Activated CD4-positive, alpha-beta T cell treated with anti-CD3 and anti-CD28 coated beads for 36 hours (primary cell): ENCODE measurements at regions of chr13 and their contacts with region 1.

Region 1: DNA sequence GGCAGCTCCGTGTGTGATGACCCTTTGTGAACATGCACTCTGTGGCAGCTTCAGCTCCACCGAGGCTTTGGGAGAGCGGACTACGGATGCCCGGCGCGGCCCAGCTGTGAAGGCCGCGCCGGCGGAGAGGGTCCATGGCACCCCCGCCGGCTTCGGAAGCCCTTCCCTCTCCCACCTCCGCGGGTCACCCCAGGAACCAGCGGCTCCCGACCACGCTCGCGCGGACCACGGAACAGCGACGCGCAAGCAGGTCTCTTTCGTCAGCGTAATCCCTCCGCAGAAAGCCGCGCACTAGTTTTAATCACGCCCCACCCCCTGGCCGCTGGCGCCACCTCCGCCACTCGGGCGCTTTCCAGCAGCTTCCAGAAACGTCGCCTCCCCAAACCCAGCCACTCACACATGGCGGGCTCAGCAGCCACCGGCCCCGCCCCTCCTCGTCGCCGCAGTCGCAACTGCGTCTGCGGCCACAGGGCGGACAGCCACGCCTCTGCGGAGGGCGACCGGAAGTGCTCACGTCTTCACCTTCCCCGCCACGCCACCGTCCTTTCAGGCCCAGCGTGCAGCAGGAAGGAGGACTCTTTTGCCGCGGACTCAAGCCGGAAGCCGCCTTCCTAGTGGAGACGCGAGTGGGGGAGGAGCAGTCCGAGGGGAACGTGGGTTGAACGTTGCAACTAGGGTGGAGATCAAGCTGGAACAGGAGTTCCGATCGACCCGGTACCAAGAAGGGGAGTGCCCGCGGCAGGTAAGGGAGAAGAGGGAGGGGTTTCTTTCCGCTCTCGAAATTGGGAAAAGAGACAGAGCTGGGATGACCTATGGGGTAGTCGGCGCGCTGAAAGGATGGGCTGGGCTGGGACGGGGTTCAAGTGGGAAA is at the start of gene USPL1:
- DNase-seq: peak; percentile 99
- ATAC-seq: peak; percentile 92
- H3K4me3 Mint-ChIP-seq: no peak within 1 kb of the TSS
- H3K27ac Mint-ChIP-seq: no peak within 1 kb of the TSS
- H3K4me1 Mint-ChIP-seq: peaks cover 31% of the 10 kb centered on the region
- H3K27me3 Mint-ChIP-seq: no peaks in the 10 kb centered on the region
- total RNA-seq, gene USPL1: 14.8 to 16.9 TPM

Region 2: DNA sequence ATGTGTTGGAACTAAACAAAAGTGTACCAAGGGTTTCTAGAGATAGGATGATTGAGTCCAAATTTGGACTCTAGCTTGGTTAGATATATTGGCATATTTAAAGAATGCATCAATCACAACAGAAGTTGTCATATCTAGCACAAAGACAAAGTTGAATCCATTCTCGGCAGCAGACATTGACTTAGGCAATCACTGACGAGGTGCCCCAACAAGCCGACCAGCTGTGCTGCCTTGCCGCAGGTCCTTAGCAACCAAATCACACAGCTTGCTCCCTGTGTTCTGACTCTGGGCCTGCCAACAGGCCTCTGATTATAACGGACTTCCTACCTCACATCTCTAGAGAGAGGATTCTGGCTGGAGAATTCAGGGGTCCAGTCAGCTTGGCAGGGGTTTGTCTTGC is 1588.7 kb before region 1 on chr13:
- CTCF ChIA-PET with region 1: no interaction called
- POLR2A ChIA-PET with region 1: no interaction called
- intact Hi-C with region 1: no loop called
- DNase-seq: no peak
- ATAC-seq: no peak
- H3K4me3 Mint-ChIP-seq: no peak overlapping the region
- H3K27ac Mint-ChIP-seq: no peak overlapping the region
- H3K4me1 Mint-ChIP-seq: no peaks in the 10 kb centered on the region
- H3K27me3 Mint-ChIP-seq: no peaks in the 10 kb centered on the region

Region 3: GRCh38 chr13:29595380-29596063 is 1022.0 kb before region 1 on chr13 and contains the start of gene SLC7A1:
- CTCF ChIA-PET with region 1: no interaction called
- POLR2A ChIA-PET with region 1: no interaction called
- intact Hi-C with region 1: loop called in 1 of 2 experiments (anchors 1 kb)
- DNase-seq: peak; percentile 92
- ATAC-seq: peak; percentile 88
- H3K4me3 Mint-ChIP-seq: peak within 1 kb of the TSS; percentile 90
- H3K27ac Mint-ChIP-seq: peak within 1 kb of the TSS; percentile 95
- H3K4me1 Mint-ChIP-seq: peaks cover 36% of the 10 kb centered on the region
- H3K27me3 Mint-ChIP-seq: no peaks in the 10 kb centered on the region
- total RNA-seq, gene SLC7A1: 91.1 to 126 TPM

Region 4: GRCh38 chr13:30148171-30148754 is 469.3 kb before region 1 on chr13:
- CTCF ChIA-PET with region 1: interaction called, 3 read pairs
- POLR2A ChIA-PET with region 1: interaction called, 3 read pairs
- intact Hi-C with region 1: loop called (anchors 2 to 5 kb)
- DNase-seq: peak; percentile 51
- ATAC-seq: peak; percentile 42
- H3K4me3 Mint-ChIP-seq: no peak overlapping the region
- H3K27ac Mint-ChIP-seq: peak overlapping the region; percentile 87
- H3K4me1 Mint-ChIP-seq: peaks cover 93% of the 10 kb centered on the region
- H3K27me3 Mint-ChIP-seq: no peaks in the 10 kb centered on the region

Region 5: GRCh38 chr13:30329009-30329585 is 288.5 kb before region 1 on chr13:
- CTCF ChIA-PET with region 1: no interaction called
- POLR2A ChIA-PET with region 1: no interaction called
- intact Hi-C with region 1: no loop called
- DNase-seq: no peak
- ATAC-seq: no peak
- H3K4me3 Mint-ChIP-seq: no peak overlapping the region
- H3K27ac Mint-ChIP-seq: no peak overlapping the region
- H3K4me1 Mint-ChIP-seq: no peaks in the 10 kb centered on the region
- H3K27me3 Mint-ChIP-seq: no peaks in the 10 kb centered on the region

Region 6: GRCh38 chr13:30408319-30409101 is 209.0 kb before region 1 on chr13:
- CTCF ChIA-PET with region 1: no interaction called
- POLR2A ChIA-PET with region 1: no interaction called
- intact Hi-C with region 1: loop called (anchors 1 to 5 kb)
- DNase-seq: peak; percentile 96
- ATAC-seq: peak; percentile 93
- H3K4me3 Mint-ChIP-seq: peak overlapping the region; percentile 39
- H3K27ac Mint-ChIP-seq: peak overlapping the region; percentile 37
- H3K4me1 Mint-ChIP-seq: peaks cover 20% of the 10 kb centered on the region
- H3K27me3 Mint-ChIP-seq: no peaks in the 10 kb centered on the region

Region 7: GRCh38 chr13:30673669-30674521 is 56.3 kb after region 1 on chr13:
- CTCF ChIA-PET with region 1: interaction called, 5 read pairs
- POLR2A ChIA-PET with region 1: no interaction called
- intact Hi-C with region 1: loop called in 1 of 2 experiments (anchors 1 kb)
- DNase-seq: peak; percentile 92
- ATAC-seq: peak; percentile 97
- H3K4me3 Mint-ChIP-seq: peak overlapping the region; percentile 72
- H3K27ac Mint-ChIP-seq: peak overlapping the region; percentile 73
- H3K4me1 Mint-ChIP-seq: peaks cover 12% of the 10 kb centered on the region
- H3K27me3 Mint-ChIP-seq: no peaks in the 10 kb centered on the region

Region 8: DNA sequence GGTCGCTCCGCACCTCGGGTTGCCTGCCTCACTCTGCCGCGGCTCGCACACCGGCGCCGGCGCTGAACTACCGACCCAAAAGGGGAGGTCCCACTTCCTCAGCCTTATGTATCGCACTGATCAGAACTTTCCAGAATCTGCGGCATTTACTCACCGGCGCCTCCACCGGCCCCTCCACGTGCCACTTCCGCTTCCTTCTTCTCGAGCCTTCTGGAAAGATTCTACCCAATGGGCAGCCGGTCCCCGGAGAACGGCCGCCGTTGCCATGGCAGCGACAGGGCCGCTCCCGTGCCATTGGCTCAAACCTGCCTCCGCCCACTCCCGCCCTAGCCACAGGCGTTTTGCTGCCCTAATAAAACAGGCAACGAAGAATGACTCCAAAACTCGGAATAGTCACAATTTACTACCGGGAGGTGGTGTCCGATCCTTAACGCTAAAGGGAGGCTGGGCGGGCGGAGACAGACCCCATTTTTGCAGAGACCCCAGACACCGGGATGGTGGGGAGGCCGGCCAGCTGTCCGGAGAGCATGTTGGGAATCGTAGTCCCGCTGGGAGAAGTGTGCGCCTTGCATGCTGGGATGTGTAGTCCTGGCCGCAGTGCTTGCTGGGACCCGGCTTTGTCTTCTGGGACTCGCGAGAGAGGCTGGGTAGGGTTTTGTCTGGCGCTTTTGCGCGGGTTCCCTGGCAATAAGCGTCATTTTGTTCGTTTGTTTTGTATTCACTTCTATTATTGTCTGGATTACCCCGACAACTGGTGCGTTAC is 544.5 kb after region 1 on chr13 and contains the start of gene HSPH1:
- CTCF ChIA-PET with region 1: no interaction called
- POLR2A ChIA-PET with region 1: no interaction called
- intact Hi-C with region 1: loop called (anchors 1 to 2 kb)
- DNase-seq: peak; percentile 99
- ATAC-seq: peak; percentile 91
- H3K4me3 Mint-ChIP-seq: peak within 1 kb of the TSS; percentile 88
- H3K27ac Mint-ChIP-seq: peak within 1 kb of the TSS; percentile 100
- H3K4me1 Mint-ChIP-seq: peaks cover 31% of the 10 kb centered on the region
- H3K27me3 Mint-ChIP-seq: no peaks in the 10 kb centered on the region
- total RNA-seq, gene HSPH1: 229 to 259 TPM